H1 (cell line): ENCODE measurements at regions of chr7 and their contacts with region 1.

Region 1: GRCh38 chr7:157004050-157004838 is 6.2 kb downstream of the MNX1 start:
- DNase-seq: no peak
- H3K4me3 ChIP-seq: peak overlapping the region in 3 of 4 experiments; percentile 18 to 48 (median 26); a peak in 5 of 8 replicates
- H3K27ac ChIP-seq: no peak overlapping the region
- H3K4me1 ChIP-seq: peaks cover 3 to 35% (median 11%) of the 10 kb centered on the region in 4 experiments; a peak in 6 of 7 replicates
- H3K27me3 ChIP-seq: peaks cover 94 to 100% (median 99%) of the 10 kb centered on the region in 4 experiments
- CTCF ChIP-seq: no peak
- EP300 ChIP-seq: no peak
- POLR2A ChIP-seq: no peak
- RAD21 ChIP-seq: no peak

Region 2: GRCh38 chr7:157016352-157017041 is 12.3 kb after region 1 on chr7:
- CTCF ChIA-PET with region 1: interaction called, 8 read pairs
- POLR2A ChIA-PET with region 1: interaction called, 19 read pairs
- DNase-seq: peak in 1 of 2 experiments; percentile 60
- H3K4me3 ChIP-seq: no peak overlapping the region
- H3K27ac ChIP-seq: no peak overlapping the region
- H3K4me1 ChIP-seq: peaks cover 14 to 56% (median 31%) of the 10 kb centered on the region in 4 experiments
- H3K27me3 ChIP-seq: peaks cover 91 to 100% (median 98%) of the 10 kb centered on the region in 4 experiments
- CTCF ChIP-seq: no peak
- EP300 ChIP-seq: no peak
- POLR2A ChIP-seq: no peak
- RAD21 ChIP-seq: no peak

Region 3: GRCh38 chr7:157078081-157078611 is 73.9 kb after region 1 on chr7:
- CTCF ChIA-PET with region 1: no interaction called
- POLR2A ChIA-PET with region 1: no interaction called
- DNase-seq: peak in 1 of 2 experiments; percentile 64
- H3K4me3 ChIP-seq: peak overlapping the region; percentile 34 to 54 (median 34)
- H3K27ac ChIP-seq: no peak overlapping the region
- H3K4me1 ChIP-seq: peaks cover 0 to 9% (median 5%) of the 10 kb centered on the region in 4 experiments; a peak in 4 of 7 replicates
- H3K27me3 ChIP-seq: peaks cover 0 to 18% (median 9%) of the 10 kb centered on the region in 4 experiments; a peak in 5 of 7 replicates
- CTCF ChIP-seq: no peak
- EP300 ChIP-seq: no peak
- POLR2A ChIP-seq: no peak
- RAD21 ChIP-seq: no peak